Activated naive CD4-positive, alpha-beta T cell treated with anti-CD3 and anti-CD28 coated beads for 36 hours (primary cell): ENCODE measurements at regions of chr12 and their contacts with region 1.

Region 1: GRCh38 chr12:9647825-9648700 is 21.4 kb upstream of the CLEC2D start:
- DNase-seq: peak; percentile 93
- H3K4me3 Mint-ChIP-seq: peak overlapping the region; percentile 95
- H3K27ac Mint-ChIP-seq: peak overlapping the region; percentile 99
- H3K4me1 Mint-ChIP-seq: peaks cover 47% of the 10 kb centered on the region
- H3K27me3 Mint-ChIP-seq: no peaks in the 10 kb centered on the region

Region 2: GRCh38 chr12:9667403-9668160 is 19.5 kb after region 1 on chr12:
- CTCF ChIA-PET with region 1: interaction called, 15 read pairs
- intact Hi-C with region 1: loop called (anchors 1 kb)
- DNase-seq: peak; percentile 50
- H3K4me3 Mint-ChIP-seq: peak overlapping the region; percentile 90
- H3K27ac Mint-ChIP-seq: peak overlapping the region; percentile 97
- H3K4me1 Mint-ChIP-seq: peaks cover 56% of the 10 kb centered on the region
- H3K27me3 Mint-ChIP-seq: no peaks in the 10 kb centered on the region

Region 3: DNA sequence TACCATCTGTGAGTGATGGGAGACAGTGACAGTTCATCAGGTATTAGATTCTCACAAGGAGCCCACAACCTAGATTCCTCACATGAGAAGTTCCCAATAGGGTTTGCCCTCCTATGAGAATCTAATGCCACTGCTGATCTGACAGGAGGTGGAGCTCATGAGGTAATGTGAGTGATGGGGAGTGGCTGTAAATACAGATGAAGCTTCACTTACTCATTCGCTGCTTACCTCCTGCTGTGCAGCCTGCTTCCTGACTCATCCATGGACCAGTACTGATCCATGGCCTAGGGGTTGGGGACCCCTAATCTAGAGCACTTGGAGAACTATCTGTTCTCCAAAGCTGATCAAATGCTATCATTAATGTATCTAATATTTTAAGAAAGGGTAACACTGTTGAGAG is 39.2 kb after region 1 on chr12:
- CTCF ChIA-PET with region 1: no interaction called
- intact Hi-C with region 1: loop called (anchors 5 kb)
- DNase-seq: peak; percentile 53
- H3K4me3 Mint-ChIP-seq: no peak overlapping the region
- H3K27ac Mint-ChIP-seq: peak overlapping the region; percentile 72
- H3K4me1 Mint-ChIP-seq: peaks cover 75% of the 10 kb centered on the region
- H3K27me3 Mint-ChIP-seq: no peaks in the 10 kb centered on the region

Region 4: DNA sequence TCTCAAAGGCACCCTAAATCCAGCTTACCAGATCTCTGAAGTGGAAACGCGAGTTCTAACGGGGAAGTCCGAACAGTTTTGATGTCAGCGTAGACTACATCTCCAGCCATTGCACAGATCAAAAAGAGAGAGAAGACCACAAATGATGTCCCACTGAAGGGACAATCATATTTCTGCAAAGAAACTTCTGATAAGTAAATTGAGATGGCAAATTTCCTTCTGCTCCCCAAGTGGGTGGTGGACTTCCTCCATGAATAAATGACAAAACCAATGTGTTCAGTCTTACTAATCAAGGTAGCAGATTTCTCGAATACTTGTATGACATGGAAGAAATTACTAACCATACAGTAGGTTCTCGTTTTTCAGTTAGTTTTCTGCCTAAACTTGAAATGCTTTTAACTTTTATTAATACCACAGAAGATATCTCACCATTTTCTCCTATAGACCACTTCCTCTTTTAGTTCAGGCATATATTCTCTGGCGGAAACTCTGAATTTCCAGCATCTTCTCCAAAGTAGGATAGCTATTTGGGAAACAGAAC is 84.9 kb after region 1 on chr12 and contains the start of gene CLECL1:
- CTCF ChIA-PET with region 1: no interaction called
- intact Hi-C with region 1: loop called (anchors 1 kb)
- DNase-seq: peak; percentile 44
- H3K4me3 Mint-ChIP-seq: peak within 1 kb of the TSS; percentile 63
- H3K27ac Mint-ChIP-seq: peak within 1 kb of the TSS; percentile 59
- H3K4me1 Mint-ChIP-seq: peaks cover 54% of the 10 kb centered on the region
- H3K27me3 Mint-ChIP-seq: no peaks in the 10 kb centered on the region
- total RNA-seq, gene CLECL1: 1.7 to 1.9 TPM

Region 5: DNA sequence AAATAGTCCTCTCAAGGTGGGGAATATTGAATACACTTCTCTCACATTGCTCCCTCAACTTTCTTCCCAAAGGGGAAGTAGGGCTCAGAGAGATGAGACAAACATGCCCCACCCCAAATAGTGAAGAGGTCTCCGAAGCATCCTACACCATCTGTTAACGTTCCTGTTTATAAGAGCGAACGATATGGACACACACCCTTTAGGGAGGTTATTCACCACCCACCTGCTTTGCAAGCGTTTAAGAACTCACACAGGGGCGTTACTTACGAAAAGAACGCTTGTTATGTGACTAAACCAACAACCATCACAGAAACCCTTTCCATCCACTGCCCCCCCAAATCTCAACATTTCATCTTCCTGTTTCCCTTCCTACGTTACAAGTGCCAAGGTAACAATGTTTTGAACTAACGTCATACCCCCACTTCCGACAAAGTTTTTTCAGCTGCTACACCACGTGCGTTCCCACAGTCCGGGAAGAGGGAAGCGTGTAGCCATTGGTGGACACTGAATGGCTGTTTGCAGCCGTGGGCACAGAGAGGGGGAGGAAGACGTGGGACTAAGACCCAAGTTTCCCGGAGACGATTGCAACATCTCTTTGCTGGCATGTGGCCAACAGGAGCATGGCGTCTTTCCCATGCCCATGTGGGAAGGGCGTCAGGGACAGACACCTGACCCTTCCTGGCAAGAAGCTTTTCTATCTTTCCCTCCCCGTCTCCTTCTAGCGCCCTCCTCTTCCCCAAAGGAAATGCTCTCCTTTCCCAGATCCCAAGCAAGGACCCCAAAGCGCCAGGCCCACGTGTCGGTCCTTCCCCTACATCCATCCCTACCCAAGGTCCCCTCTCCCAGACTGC is 1073.8 kb after region 1 on chr12:
- CTCF ChIA-PET with region 1: no interaction called
- intact Hi-C with region 1: loop called (anchors 10 kb)
- DNase-seq: peak; percentile 77
- H3K4me3 Mint-ChIP-seq: peak overlapping the region; percentile 95
- H3K27ac Mint-ChIP-seq: peak overlapping the region; percentile 94
- H3K4me1 Mint-ChIP-seq: peaks cover 30% of the 10 kb centered on the region
- H3K27me3 Mint-ChIP-seq: peaks cover 31% of the 10 kb centered on the region